Naive thymus-derived CD4-positive, alpha-beta T cell (primary cell): ENCODE measurements at regions of chr3 and their contacts with region 1.

Region 1: GRCh38 chr3:64533617-64534317 is 154.0 kb downstream of the ADAMTS9 start:
- DNase-seq: peak in 5 of 9 donors; percentile 1 to 32 (median 3)
- ATAC-seq: peak; percentile 61
- H3K4me3 ChIP-seq: no peak overlapping the region
- H3K4me3 Mint-ChIP-seq: no peak overlapping the region
- H3K27ac ChIP-seq: no peak overlapping the region
- H3K27ac Mint-ChIP-seq: no peak overlapping the region
- H3K4me1 ChIP-seq: no peaks in the 10 kb centered on the region
- H3K4me1 Mint-ChIP-seq: peaks cover 0 to 14% (median 0%) of the 10 kb centered on the region in 7 donors
- H3K27me3 ChIP-seq: no peaks in the 10 kb centered on the region
- H3K27me3 Mint-ChIP-seq: peaks cover 4 to 21% (median 11%) of the 10 kb centered on the region in 5 donors

Region 2: GRCh38 chr3:64915778-64916177 is 382.0 kb after region 1 on chr3:
- CTCF ChIA-PET with region 1: no interaction called
- POLR2A ChIA-PET with region 1: no interaction called
- intact Hi-C with region 1: no loop called
- DNase-seq: no peak
- ATAC-seq: no peak
- H3K4me3 ChIP-seq: no peak overlapping the region
- H3K4me3 Mint-ChIP-seq: no peak overlapping the region
- H3K27ac ChIP-seq: no peak overlapping the region
- H3K27ac Mint-ChIP-seq: no peak overlapping the region
- H3K4me1 ChIP-seq: no peaks in the 10 kb centered on the region
- H3K4me1 Mint-ChIP-seq: no peaks in the 10 kb centered on the region
- H3K27me3 ChIP-seq: no peaks in the 10 kb centered on the region
- H3K27me3 Mint-ChIP-seq: peaks cover 0 to 6% (median 0%) of the 10 kb centered on the region in 5 donors

Region 3: DNA sequence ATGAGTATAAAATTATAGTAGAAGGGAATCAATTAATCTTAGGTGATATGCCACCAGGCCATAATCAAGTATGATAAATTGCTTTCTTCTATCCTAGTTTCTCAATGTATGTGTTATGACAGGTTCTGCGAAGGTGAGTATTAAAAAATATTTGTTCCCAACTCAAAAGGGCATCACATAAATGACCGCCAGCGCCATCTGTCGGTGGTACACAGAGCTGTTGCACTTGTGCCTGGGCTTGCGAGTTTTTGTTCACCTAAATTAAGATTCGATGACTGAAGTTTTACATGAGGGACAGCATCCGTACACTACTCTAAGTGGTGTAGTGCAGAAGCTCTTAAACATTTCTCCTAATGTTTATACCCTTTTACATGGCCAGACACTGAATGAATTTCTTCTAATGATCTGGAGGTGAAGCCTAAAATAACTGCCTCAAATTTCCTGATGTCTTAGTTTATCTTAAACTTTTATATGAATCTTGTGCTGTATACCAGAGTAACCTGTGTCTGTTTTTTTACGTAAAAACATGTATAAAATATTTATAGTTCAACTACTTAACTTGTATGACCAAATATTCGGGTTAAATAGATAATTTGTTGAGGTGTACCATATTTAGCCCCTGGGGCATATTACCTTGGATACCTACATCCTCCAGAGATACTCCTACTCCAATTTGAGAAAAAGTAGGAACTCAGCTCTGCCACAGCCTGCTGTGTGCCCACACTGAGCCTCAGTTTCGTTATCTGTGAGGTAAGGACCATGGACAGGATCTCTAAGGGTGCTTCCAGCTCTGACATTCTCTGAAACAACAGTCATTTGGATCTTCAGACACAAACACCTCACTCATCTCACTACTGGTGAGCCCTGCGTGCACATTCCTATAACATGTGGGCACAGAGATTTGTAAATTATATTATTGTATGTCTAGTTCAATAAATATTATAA is 1139.4 kb after region 1 on chr3:
- CTCF ChIA-PET with region 1: no interaction called
- POLR2A ChIA-PET with region 1: no interaction called
- intact Hi-C with region 1: loop called in 1 of 2 experiments (anchors 5 kb)
- DNase-seq: peak in 1 of 9 donors; percentile 20
- ATAC-seq: no peak
- H3K4me3 ChIP-seq: no peak overlapping the region
- H3K4me3 Mint-ChIP-seq: no peak overlapping the region
- H3K27ac ChIP-seq: no peak overlapping the region
- H3K27ac Mint-ChIP-seq: no peak overlapping the region
- H3K4me1 ChIP-seq: no peaks in the 10 kb centered on the region
- H3K4me1 Mint-ChIP-seq: no peaks in the 10 kb centered on the region
- H3K27me3 ChIP-seq: no peaks in the 10 kb centered on the region
- H3K27me3 Mint-ChIP-seq: no peaks in the 10 kb centered on the region

Region 4: DNA sequence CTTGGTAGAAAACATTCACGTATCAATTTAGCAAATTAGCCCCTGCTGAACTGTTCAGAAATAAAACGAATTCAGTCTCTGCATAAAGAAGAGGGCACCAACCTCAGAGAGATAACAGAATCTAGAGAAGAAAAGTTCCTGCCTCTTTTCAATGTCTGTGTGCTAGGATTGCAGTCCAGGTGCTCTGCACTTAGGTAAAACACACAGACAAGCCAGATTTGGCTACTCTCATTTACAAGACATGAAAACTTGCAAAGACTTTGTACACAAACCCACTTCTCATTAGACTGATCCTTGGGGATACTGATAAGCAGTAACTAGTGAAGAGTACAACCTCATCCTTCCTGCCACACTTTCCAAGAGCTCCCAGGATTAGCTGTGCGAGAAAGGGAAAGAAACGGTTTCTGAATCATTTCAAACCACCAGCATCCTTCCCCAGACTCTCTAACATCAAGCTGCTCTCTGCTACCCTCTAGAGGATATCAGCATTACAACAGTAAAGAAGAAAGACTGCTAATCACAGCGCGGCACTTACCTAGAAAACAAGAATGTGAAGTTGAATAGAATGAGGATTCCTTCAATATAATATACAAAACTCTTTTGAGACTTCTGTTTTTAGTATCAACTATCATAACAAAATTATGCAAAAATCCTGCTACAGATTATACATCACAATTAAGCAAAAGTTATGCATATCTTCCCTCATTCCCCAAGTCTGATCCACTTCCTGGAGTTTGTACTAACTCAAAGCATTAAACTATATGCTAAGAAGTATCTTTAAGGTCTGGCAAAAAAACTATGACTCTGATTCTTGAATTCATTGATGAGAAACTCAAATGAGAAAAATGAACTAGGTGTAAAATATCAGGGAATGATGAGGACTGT is 1198.5 kb after region 1 on chr3:
- CTCF ChIA-PET with region 1: no interaction called
- POLR2A ChIA-PET with region 1: no interaction called
- intact Hi-C with region 1: loop called (anchors 1 to 5 kb)
- DNase-seq: peak in 5 of 9 donors; percentile 5 to 31 (median 16)
- ATAC-seq: peak; percentile 68
- H3K4me3 ChIP-seq: no peak overlapping the region
- H3K4me3 Mint-ChIP-seq: no peak overlapping the region
- H3K27ac ChIP-seq: no peak overlapping the region
- H3K27ac Mint-ChIP-seq: no peak overlapping the region
- H3K4me1 ChIP-seq: no peaks in the 10 kb centered on the region
- H3K4me1 Mint-ChIP-seq: peaks cover 0 to 4% (median 1%) of the 10 kb centered on the region in 7 donors
- H3K27me3 ChIP-seq: no peaks in the 10 kb centered on the region
- H3K27me3 Mint-ChIP-seq: peaks cover 0 to 14% (median 8%) of the 10 kb centered on the region in 5 donors